Activated CD4-positive, alpha-beta T cell treated with anti-CD3 and anti-CD28 coated beads, Interleukin-2, amount 10 ng/mL, durations not matched to agents 24 days and 14 days (primary cell): ENCODE measurements at regions of chr2 and their contacts with region 1.

Region 1: GRCh38 chr2:96856776-96857673 is 791 bp downstream of the ANKRD39 start:
- DNase-seq: peak; percentile 82
- H3K4me3 Mint-ChIP-seq: peak overlapping the region; percentile 92
- H3K27ac Mint-ChIP-seq: peak overlapping the region; percentile 93
- H3K4me1 Mint-ChIP-seq: peaks cover 28% of the 10 kb centered on the region
- H3K27me3 Mint-ChIP-seq: no peaks in the 10 kb centered on the region

Region 2: GRCh38 chr2:96638144-96639121 is 218.6 kb before region 1 on chr2 and contains the start of gene KANSL3:
- intact Hi-C with region 1: loop called (anchors 1 kb)
- DNase-seq: peak; percentile 98
- H3K4me3 Mint-ChIP-seq: peak within 1 kb of the TSS; percentile 97
- H3K27ac Mint-ChIP-seq: peak within 1 kb of the TSS; percentile 97
- H3K4me1 Mint-ChIP-seq: peaks cover 24% of the 10 kb centered on the region
- H3K27me3 Mint-ChIP-seq: peaks cover 3% of the 10 kb centered on the region
- total RNA-seq, gene KANSL3: 45.5 and 46.5 TPM in 2 replicates

Region 3: GRCh38 chr2:96868555-96869280 is 11.7 kb after region 1 on chr2:
- intact Hi-C with region 1: loop called (anchors 1 kb)
- DNase-seq: peak; percentile 90
- H3K4me3 Mint-ChIP-seq: peak overlapping the region; percentile 87
- H3K27ac Mint-ChIP-seq: peak overlapping the region; percentile 84
- H3K4me1 Mint-ChIP-seq: peaks cover 21% of the 10 kb centered on the region
- H3K27me3 Mint-ChIP-seq: peaks cover 10% of the 10 kb centered on the region

Region 4: GRCh38 chr2:96951093-96951654 is 94.1 kb after region 1 on chr2:
- intact Hi-C with region 1: loop called (anchors 1 kb)
- DNase-seq: peak; percentile 94
- H3K4me3 Mint-ChIP-seq: no peak overlapping the region
- H3K27ac Mint-ChIP-seq: peak overlapping the region; percentile 13
- H3K4me1 Mint-ChIP-seq: peaks cover 26% of the 10 kb centered on the region
- H3K27me3 Mint-ChIP-seq: no peaks in the 10 kb centered on the region

Region 5: GRCh38 chr2:96960153-96960961 is 103.3 kb after region 1 on chr2:
- intact Hi-C with region 1: loop called (anchors 1 kb)
- DNase-seq: peak; percentile 95
- H3K4me3 Mint-ChIP-seq: peak overlapping the region; percentile 65
- H3K27ac Mint-ChIP-seq: peak overlapping the region; percentile 84
- H3K4me1 Mint-ChIP-seq: peaks cover 52% of the 10 kb centered on the region
- H3K27me3 Mint-ChIP-seq: no peaks in the 10 kb centered on the region